RWPE1 (cell line): ENCODE measurements at regions of chr20 and their contacts with region 1.

Region 1: GRCh38 chr20:37564388-37565133 is 36.9 kb upstream of the BLCAP start:
- DNase-seq: peak; percentile 84
- H3K27ac ChIP-seq: no peak overlapping the region
- CTCF ChIP-seq: peak; percentile 99

Region 2: GRCh38 chr20:37575884-37576283 is 11.3 kb after region 1 on chr20:
- CTCF ChIA-PET with region 1: interaction called, 15 read pairs
- POLR2A ChIA-PET with region 1: no interaction called
- DNase-seq: no peak
- H3K27ac ChIP-seq: no peak overlapping the region
- CTCF ChIP-seq: no peak

Region 3: GRCh38 chr20:37994512-37994911 is 430.0 kb after region 1 on chr20:
- CTCF ChIA-PET with region 1: interaction called, 24 read pairs
- POLR2A ChIA-PET with region 1: no interaction called
- DNase-seq: peak; percentile 99
- H3K27ac ChIP-seq: peak overlapping the region; percentile 46
- CTCF ChIP-seq: no peak